AG04449 (cell line): ENCODE measurements at regions of chr13 and their contacts with region 1.

Region 1: DNA sequence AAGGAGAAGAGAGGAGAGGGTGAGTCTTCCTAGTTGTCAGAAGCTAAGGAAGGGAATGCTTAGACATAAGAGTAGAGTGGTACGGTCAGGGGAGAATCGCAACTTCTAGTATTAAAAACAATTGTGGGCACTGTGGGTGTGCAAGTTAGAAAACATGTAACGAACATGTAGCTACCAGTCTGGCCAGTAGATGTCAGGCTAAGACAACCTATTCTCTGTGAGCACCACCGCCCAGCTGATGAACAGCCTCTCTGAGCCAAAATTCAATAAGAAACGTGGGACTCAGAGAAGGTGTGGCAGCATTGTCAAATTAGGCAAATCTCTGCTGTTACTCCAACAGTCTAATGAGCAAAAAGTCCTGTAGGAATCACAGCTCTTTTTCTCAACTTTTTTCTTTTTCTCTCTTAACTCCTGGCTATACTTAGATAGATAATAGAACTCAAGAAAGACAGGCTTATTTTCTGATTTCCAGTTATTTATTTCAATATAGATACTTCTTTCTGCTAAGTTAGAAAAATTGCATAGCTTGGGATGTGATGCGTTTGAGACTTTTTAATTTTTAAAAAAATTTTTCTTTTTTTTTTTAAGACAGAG is 186.2 kb downstream of the USP12 start:
- DNase-seq: peak; percentile 29
- H3K4me3 ChIP-seq: no peak overlapping the region
- CTCF ChIP-seq: peak; percentile 66

Region 2: GRCh38 chr13:26656919-26657318 is 328.5 kb before region 1 on chr13:
- CTCF ChIA-PET with region 1: no interaction called
- POLR2A ChIA-PET with region 1: no interaction called
- DNase-seq: peak; percentile 51
- H3K4me3 ChIP-seq: no peak overlapping the region
- CTCF ChIP-seq: no peak

Region 3: DNA sequence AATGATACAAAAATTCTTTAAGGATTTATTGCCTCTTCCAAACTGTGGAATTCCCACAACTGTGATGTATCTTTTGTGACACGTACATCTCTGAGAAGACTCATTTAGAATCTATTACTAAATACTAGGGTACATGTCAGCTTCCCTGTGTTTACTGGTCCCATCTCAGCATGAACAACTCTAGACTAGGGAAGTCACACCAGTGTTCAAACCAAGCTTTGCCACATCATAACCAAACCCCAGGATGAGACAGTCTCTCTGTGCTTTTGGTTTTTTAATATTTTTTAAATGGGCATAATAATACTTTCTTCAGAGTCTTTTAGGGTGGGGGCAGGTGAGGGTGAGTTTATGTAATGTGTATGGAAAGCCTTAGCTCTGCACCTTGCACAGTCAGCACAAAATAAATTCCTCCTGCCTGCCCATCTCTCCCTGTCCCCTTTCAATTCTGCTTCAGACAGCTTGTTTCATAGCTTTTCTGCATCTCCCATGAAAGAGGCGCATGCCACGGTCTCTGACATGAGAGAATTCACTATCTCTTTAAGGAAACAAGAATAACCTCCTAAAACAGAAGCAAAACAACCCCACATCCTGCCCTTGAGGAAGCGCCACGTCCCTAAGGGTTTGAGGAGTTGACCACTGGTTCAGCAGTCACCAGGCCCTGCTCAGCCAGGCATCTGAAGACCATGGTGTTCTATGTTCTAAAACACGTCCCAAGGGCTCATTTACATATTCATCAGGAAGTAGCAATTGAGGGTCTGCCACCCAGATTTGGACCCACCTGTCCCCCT is 11.8 kb after region 1 on chr13:
- CTCF ChIA-PET with region 1: interaction called, 13 read pairs
- POLR2A ChIA-PET with region 1: no interaction called
- DNase-seq: no peak
- H3K4me3 ChIP-seq: no peak overlapping the region
- CTCF ChIP-seq: no peak

Region 4: GRCh38 chr13:27170516-27171243 is 185.3 kb after region 1 on chr13:
- CTCF ChIA-PET with region 1: interaction called, 13 read pairs
- POLR2A ChIA-PET with region 1: no interaction called
- DNase-seq: no peak
- H3K4me3 ChIP-seq: peak overlapping the region; percentile 74
- CTCF ChIP-seq: no peak

Region 5: DNA sequence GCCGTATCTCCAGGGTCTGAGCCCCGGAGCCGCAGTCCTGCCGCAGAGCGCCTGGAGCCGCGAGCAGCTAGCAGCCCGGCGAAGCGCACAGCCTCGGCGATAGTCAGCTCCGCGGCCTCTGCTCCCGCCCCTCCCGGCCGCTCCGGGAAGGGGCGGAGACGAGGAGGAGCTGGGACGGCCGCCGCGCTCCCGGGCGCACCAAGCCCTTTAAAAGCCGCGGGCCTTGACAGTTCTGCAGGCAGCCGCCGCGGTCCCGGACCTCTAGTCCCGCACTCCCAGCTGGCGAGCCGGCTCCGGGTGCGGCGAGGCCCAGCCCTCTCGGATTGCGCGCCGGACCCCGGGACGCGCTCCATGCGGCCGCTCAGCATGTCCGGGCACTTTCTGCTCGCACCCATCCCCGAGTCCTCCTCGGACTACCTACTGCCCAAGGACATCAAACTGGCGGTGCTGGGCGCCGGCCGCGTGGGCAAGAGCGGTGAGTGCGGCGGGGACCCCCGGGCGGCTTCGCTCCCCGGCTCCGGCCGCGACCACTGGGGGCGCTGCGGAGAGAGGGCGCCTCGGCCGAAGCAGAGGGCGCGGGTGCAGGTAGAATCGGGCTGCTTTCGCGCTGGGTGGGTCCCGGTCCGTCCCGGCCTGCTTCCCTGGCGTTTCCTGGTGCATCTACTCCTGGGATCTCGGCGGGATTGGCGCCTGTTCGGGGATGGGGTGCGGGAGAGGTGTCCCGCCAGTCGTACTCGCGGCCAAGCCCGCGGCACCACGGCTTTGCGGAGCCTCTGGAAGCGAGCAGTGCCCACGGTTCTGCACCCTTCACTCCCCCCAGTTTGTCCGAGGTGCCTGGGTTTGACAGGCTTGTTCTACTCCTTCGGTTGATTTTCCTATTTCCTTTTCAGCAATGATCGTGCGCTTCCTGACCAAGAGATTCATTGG is 285.5 kb after region 1 on chr13 and contains the start of gene RASL11A:
- CTCF ChIA-PET with region 1: interaction called, 25 read pairs
- POLR2A ChIA-PET with region 1: no interaction called
- DNase-seq: no peak
- H3K4me3 ChIP-seq: peak within 1 kb of the TSS; percentile 86
- CTCF ChIP-seq: peak; percentile 90

Region 6: DNA sequence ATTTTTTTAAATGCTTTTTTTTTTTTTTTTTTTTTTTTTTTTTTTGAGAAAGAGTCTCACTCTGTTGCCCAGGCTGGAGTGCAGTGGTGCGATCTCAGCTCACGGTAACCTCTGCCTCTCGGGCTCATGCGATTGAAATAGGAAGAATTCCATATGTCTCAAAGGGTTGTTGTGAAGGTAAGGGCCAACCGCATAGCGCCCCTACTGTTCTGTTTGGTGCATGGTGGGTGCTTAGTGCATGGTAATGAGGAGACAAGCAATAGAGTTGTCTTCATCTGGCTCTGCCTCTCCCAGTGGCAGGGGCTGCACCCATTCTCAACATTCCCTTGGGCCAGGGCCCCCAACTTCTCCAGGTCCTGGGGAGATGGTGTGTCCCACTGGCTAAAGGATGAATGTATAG is 353.9 kb after region 1 on chr13:
- CTCF ChIA-PET with region 1: interaction called, 18 read pairs
- POLR2A ChIA-PET with region 1: no interaction called
- DNase-seq: no peak
- H3K4me3 ChIP-seq: no peak overlapping the region
- CTCF ChIP-seq: peak; percentile 63

Region 7: GRCh38 chr13:27374650-27375049 is 389.3 kb after region 1 on chr13:
- CTCF ChIA-PET with region 1: interaction called, 31 read pairs
- POLR2A ChIA-PET with region 1: no interaction called
- DNase-seq: peak; percentile 40
- H3K4me3 ChIP-seq: no peak overlapping the region
- CTCF ChIP-seq: peak; percentile 76